T-cell (primary cell): ENCODE measurements at regions of chr3 and their contacts with region 1.

Region 1: DNA sequence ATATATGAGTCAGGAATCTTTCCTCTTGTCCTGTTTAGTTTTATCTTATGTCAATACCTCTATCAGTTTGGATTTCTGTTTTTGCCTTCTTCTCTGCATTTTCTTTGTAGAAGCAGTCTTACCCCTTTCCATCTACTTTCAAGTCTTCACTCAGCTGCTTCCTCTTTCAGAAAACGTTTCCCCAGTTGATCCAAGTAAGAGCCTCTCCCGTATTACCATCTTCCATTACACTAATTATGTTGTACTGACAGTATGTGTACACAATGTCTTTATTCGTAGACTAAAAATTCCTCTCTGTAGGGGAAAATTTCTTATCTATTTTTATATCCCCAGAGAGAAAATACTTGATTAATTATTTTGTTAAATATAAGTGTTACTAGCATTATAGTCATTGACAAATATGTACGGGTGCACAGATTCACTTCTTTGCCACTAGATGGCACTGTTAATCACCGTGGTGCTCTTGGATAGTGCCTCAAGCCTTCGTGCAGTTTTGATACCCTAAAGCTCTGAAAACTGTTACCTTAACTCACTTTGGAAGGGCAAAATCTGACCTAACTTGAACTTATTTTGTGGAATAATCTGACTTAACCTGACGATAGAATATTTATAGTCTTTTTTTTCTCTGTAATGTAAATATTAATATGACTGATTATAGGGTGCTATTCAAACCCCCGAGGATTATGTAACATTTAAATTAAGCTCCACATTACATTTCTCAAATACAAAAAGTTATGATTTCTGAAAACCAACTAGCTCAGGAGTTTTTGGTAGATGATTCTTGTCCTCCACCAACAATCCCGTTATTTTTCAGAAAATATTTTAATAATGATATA is 74.2 kb upstream of the POU1F1 start:
- DNase-seq: peak in 9 of 35 experiments; percentile 1 to 68 (median 5)
- ATAC-seq: peak; percentile 77 to 83 (median 80)
- H3K4me3 ChIP-seq: no peak overlapping the region
- H3K4me3 Mint-ChIP-seq: no peak overlapping the region
- H3K27ac ChIP-seq: no peak overlapping the region
- H3K27ac Mint-ChIP-seq: no peak overlapping the region
- H3K4me1 ChIP-seq: no peaks in the 10 kb centered on the region
- H3K4me1 Mint-ChIP-seq: no peaks in the 10 kb centered on the region
- H3K27me3 ChIP-seq: peaks cover 0 to 4% of the 10 kb centered on the region in 2 experiments
- H3K27me3 Mint-ChIP-seq: peaks cover 6 to 7% of the 10 kb centered on the region in 2 donors

Region 2: GRCh38 chr3:86634361-86634760 is 716.2 kb before region 1 on chr3:
- CTCF ChIA-PET with region 1: interaction called in 1 of 2 experiments, 11 read pairs
- POLR2A ChIA-PET with region 1: no interaction called
- DNase-seq: no peak
- ATAC-seq: no peak
- H3K4me3 ChIP-seq: no peak overlapping the region
- H3K4me3 Mint-ChIP-seq: no peak overlapping the region
- H3K27ac ChIP-seq: no peak overlapping the region
- H3K27ac Mint-ChIP-seq: no peak overlapping the region
- H3K4me1 ChIP-seq: no peaks in the 10 kb centered on the region
- H3K4me1 Mint-ChIP-seq: no peaks in the 10 kb centered on the region
- H3K27me3 ChIP-seq: no peaks in the 10 kb centered on the region
- H3K27me3 Mint-ChIP-seq: no peaks in the 10 kb centered on the region

Region 3: DNA sequence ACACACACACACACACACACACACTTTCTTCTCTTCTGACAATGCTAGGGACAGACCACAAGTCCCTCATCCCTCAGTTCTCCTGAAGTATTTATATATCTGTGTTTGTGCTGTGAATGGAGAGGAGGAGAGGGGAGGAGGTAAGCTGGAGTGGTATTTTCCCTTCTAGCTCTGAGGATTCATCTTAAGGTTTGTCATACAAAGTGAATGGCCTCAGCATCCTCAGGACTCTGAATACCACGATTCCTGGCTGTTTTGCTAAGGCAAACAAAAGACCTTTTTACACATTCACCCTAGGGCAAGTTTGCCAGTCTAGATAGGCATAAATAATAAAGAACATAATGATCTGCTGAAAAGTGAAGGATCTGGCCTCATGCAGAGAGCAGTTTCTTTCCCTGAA is 189.2 kb before region 1 on chr3:
- CTCF ChIA-PET with region 1: no interaction called
- POLR2A ChIA-PET with region 1: no interaction called
- DNase-seq: no peak
- ATAC-seq: no peak
- H3K4me3 ChIP-seq: no peak overlapping the region
- H3K4me3 Mint-ChIP-seq: no peak overlapping the region
- H3K27ac ChIP-seq: no peak overlapping the region
- H3K27ac Mint-ChIP-seq: no peak overlapping the region
- H3K4me1 ChIP-seq: no peaks in the 10 kb centered on the region
- H3K4me1 Mint-ChIP-seq: no peaks in the 10 kb centered on the region
- H3K27me3 ChIP-seq: no peaks in the 10 kb centered on the region
- H3K27me3 Mint-ChIP-seq: peaks cover 4 to 12% of the 10 kb centered on the region in 2 donors

Region 4: DNA sequence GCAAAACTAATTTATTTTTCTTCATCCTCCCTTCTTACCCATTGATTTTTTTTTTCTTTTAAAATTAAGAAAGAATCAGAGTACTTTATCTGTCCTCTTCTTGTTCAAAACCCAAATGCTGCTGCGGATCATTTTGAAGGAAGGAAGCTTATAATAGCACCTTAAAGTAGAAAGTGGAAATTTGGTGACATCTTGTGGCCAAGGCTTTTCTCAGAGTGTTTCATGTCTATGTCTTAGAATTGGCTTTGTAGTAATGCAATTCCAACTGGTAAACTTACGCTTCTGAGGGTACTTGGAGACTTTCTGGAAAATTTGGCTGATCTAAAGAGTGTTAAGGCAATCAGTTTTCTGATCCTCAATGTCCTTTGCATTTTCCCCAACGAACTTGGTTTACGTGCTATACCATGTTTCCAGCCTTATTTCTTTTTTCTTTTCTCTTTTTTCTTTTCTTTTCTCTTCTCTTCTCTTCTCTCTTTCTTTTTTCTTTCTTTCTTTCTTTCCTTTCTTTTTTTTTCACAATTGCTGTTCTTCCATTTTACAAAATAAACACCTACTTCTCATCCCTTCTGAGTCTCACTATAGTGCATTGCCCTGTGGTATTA is 829.9 kb after region 1 on chr3:
- CTCF ChIA-PET with region 1: interaction called, 3 to 10 read pairs
- POLR2A ChIA-PET with region 1: no interaction called
- DNase-seq: peak in 18 of 35 experiments; percentile 0 to 66 (median 8)
- ATAC-seq: peak in 2 of 4 experiments; percentile 37 to 66
- H3K4me3 ChIP-seq: no peak overlapping the region
- H3K4me3 Mint-ChIP-seq: no peak overlapping the region
- H3K27ac ChIP-seq: no peak overlapping the region
- H3K27ac Mint-ChIP-seq: no peak overlapping the region
- H3K4me1 ChIP-seq: no peaks in the 10 kb centered on the region
- H3K4me1 Mint-ChIP-seq: peaks cover 3 to 9% (median 7%) of the 10 kb centered on the region in 3 donors
- H3K27me3 ChIP-seq: no peaks in the 10 kb centered on the region
- H3K27me3 Mint-ChIP-seq: no peaks in the 10 kb centered on the region